ENCODE measurements at regions of chr19 and their contacts with region 1.

Region 1: DNA sequence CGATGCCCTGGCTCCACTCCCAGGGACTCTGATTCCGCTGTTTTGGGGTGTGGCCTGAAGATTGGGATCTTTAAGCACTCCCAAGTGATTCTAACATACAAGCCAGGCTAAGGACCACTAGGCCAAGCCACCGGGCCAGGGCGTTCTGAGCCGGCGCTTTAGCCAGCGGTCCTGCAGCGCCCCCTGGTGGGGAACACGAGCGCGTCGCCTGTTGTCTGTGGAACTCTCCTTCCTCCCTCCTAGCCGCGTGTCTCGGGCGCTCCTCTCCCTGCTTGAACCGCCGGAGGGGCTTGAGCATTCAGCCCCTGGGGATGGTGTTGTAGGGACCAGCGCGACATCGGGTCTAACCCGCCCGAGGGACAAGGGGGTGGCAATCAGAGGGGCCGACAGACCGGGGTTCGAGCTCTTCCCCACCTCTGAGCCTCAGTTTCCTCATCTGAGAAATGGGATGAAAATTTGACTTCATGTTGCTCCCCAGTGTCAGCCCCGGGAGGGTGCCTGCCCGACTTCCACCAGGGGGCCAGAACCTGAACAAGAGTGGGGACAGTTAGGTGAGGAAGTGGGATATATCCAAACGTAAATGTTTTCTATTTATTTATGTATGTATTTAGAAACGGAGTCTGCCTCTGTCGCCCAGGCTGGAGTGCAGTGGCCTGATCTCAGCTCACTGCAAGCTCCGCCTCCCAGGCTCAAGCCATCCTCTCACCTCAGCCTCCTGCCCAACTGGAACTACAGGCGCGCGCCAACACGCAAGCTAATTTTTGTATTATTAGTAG is 18.0 kb upstream of the PNMA8B start:
- DNase-seq: peak; percentile 80 to 91 (median 84)
- H3K4me3 ChIP-seq: no peak overlapping the region
- H3K27ac ChIP-seq: no peak overlapping the region
- H3K4me1 ChIP-seq: no peaks in the 10 kb centered on the region
- H3K27me3 ChIP-seq: no peaks in the 10 kb centered on the region
- CTCF ChIP-seq: peak; percentile 98 to 100 (median 99)
- POLR2A ChIP-seq: no peak

Region 2: DNA sequence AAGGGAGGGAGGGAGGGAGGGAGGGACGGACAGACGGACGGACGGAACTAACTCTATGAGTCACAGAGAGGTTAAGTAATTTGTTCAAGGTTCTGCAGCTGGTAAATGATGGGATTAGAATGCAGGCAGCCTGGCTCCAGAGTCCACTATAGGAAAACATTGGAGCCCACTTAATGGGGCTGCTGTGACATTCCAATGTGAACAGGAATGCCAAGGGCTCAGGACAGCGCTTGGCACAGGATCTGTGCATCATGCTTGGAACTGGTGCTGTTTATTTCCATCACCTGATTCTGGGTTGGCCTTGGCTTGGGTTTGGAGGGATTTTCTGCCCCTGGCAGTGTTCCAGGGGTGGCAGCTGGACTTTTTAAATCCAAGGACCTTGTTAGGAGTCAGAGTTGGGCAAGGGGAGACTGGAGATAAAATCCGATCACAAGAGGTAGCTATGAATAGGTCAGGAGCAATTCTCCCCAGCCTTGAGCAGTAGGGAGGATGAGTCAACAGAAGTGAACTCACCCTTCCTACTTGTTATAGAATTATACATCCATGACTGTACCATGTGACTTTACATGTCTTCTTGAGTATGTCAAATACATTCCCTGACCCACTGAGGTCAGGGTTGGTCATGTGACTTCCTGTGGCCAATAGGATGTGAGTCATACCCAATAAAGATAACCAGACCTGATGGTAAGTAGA is 224.6 kb before region 1 on chr19:
- intact Hi-C with region 1: loop called (anchors 10 kb)
- DNase-seq: peak; percentile 82 to 94 (median 89)
- H3K4me3 ChIP-seq: no peak overlapping the region
- H3K27ac ChIP-seq: peak overlapping the region; percentile 60 to 91 (median 81)
- H3K4me1 ChIP-seq: peaks cover 4 to 11% of the 10 kb centered on the region in 2 donors
- H3K27me3 ChIP-seq: no peaks in the 10 kb centered on the region
- CTCF ChIP-seq: no peak
- POLR2A ChIP-seq: no peak

Region 3: DNA sequence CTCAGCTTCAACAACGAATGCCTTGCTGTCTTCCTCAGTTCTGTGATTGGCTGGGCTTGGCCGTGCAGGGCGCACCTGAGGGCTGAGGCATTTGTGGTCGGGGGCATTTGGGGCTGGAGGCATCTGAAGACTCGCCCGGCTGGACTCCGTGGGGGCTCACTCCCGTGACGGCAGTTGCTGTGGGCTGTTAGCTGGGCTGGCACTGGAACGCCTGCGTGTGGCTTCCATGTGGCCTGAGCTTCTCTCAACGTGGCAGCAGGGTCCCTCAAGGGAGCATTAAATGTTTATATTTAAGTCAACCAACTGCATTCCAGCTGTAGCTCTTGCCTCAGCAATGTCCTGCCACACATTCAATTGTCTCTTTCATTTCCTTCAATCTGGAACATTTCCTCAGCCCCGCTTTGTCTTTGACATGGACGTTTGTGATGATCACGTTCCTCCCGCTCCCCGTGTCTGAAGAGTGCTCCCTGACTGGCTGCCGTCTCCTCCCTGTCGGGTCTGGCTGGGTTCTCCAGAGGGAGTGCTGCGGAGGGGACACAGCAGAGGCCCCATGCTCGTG is 121.3 kb before region 1 on chr19:
- intact Hi-C with region 1: loop called (anchors 2 to 10 kb)
- DNase-seq: peak in 2 of 7 donors; percentile 15 to 26
- H3K4me3 ChIP-seq: no peak overlapping the region
- H3K27ac ChIP-seq: peak overlapping the region in 2 of 5 donors; percentile 6 to 29
- H3K4me1 ChIP-seq: peaks cover 0 to 7% of the 10 kb centered on the region in 2 donors
- H3K27me3 ChIP-seq: no peaks in the 10 kb centered on the region
- CTCF ChIP-seq: no peak
- POLR2A ChIP-seq: no peak

Region 4: GRCh38 chr19:46480415-46480814 is 33.2 kb before region 1 on chr19:
- intact Hi-C with region 1: loop called in 1 of 2 experiments (anchors 5 kb)
- DNase-seq: no peak
- H3K4me3 ChIP-seq: no peak overlapping the region
- H3K27ac ChIP-seq: peak overlapping the region in 2 of 5 donors; percentile 69 to 78
- H3K4me1 ChIP-seq: peaks cover 0 to 9% of the 10 kb centered on the region in 2 donors
- H3K27me3 ChIP-seq: no peaks in the 10 kb centered on the region
- CTCF ChIP-seq: no peak
- POLR2A ChIP-seq: no peak

Measured in adrenal gland (tissue), 19 donors.